ENCODE measurements at regions of chr2 and their contacts with region 1.

Region 1: GRCh38 chr2:134232868-134233727 is 20.8 kb upstream of the MGAT5 start:
- DNase-seq: no peak
- ATAC-seq: peak; percentile 59
- H3K4me3 ChIP-seq: peak overlapping the region; percentile 19
- H3K27ac ChIP-seq: peak overlapping the region; percentile 83
- H3K4me1 ChIP-seq: peaks cover 72% of the 10 kb centered on the region
- H3K27me3 ChIP-seq: no peaks in the 10 kb centered on the region
- CTCF ChIP-seq: 0 out of 6 replicates have a peak, but pooled peaks of 2 of the 3 experiments have one; percentile 6 to 17
- EP300 ChIP-seq: 0 out of 4 replicates have a peak, but pooled peaks have one; percentile 4 to 22
- POLR2A ChIP-seq: no peak
- RAD21 ChIP-seq: no peak

Region 2: GRCh38 chr2:133953524-133953923 is 279.6 kb before region 1 on chr2:
- CTCF ChIA-PET with region 1: no interaction called
- POLR2A ChIA-PET with region 1: no interaction called
- RAD21 ChIA-PET with region 1: no interaction called
- SMC1A ChIA-PET with region 1: no interaction called
- in situ Hi-C with region 1: no loop called
- intact Hi-C with region 1: loop called (anchors 10 kb)
- DNase-seq: peak; percentile 51
- ATAC-seq: peak; percentile 81
- H3K4me3 ChIP-seq: no peak overlapping the region
- H3K27ac ChIP-seq: peak overlapping the region; percentile 27; the same call in 1 of the 2 replicates
- H3K4me1 ChIP-seq: peaks cover 46% of the 10 kb centered on the region
- H3K27me3 ChIP-seq: no peaks in the 10 kb centered on the region
- CTCF ChIP-seq: no peak
- EP300 ChIP-seq: no peak
- POLR2A ChIP-seq: no peak
- RAD21 ChIP-seq: no peak

Measured in GM12878 (cell line).